Right ventricle myocardium superior (tissue), 1 donor: ENCODE measurements at regions of chr15 and their contacts with region 1.

Region 1: GRCh38 chr15:78811124-78811824 is at the start of gene ADAMTS7:
- DNase-seq: peak; percentile 86
- ATAC-seq: peak; percentile 85
- total RNA-seq, gene ADAMTS7: 31.0 TPM

Region 2: DNA sequence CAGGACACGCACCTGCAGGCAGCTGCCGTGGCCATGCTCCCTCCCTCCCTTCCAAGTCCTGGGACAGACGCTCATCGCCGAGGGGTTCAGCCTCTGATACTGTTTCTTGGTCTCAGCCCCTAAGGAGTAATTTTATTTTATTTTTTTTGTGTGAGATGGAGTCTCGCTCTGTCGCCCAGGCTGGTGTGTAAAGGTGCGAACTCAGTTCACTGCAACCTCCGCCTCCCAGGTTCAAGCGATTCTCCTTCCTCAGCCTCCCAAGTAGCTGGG is 53.7 kb before region 1 on chr15:
- intact Hi-C with region 1: loop called (anchors 5 kb)
- DNase-seq: no peak
- ATAC-seq: no peak

Region 3: GRCh38 chr15:78859971-78860732 is 48.9 kb after region 1 on chr15:
- intact Hi-C with region 1: loop called (anchors 10 kb)
- DNase-seq: peak; percentile 83
- ATAC-seq: peak; percentile 90

Region 4: DNA sequence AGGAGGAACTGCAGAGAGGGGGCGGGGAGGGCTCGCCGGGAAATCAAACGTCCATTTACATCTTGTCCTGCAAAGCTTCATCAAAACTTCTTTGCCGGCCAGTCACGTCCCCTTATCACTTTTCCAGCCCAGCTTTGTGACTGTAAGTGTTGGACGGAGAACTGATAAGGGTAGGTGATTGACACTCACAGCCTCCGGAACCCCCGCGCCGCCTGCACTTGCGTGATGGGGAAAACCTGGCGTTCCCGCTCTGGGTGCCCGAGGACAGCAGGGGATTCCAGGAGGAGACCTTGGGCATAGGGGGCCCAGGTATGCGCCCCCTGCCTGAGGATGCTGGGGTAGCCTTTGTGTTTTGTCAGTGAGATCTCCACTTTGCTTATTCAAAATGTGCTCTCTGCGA is 398.4 kb after region 1 on chr15:
- intact Hi-C with region 1: no loop called
- DNase-seq: no peak
- ATAC-seq: no peak